ENCODE measurements at regions of chr20 and their contacts with region 1.

Region 1: DNA sequence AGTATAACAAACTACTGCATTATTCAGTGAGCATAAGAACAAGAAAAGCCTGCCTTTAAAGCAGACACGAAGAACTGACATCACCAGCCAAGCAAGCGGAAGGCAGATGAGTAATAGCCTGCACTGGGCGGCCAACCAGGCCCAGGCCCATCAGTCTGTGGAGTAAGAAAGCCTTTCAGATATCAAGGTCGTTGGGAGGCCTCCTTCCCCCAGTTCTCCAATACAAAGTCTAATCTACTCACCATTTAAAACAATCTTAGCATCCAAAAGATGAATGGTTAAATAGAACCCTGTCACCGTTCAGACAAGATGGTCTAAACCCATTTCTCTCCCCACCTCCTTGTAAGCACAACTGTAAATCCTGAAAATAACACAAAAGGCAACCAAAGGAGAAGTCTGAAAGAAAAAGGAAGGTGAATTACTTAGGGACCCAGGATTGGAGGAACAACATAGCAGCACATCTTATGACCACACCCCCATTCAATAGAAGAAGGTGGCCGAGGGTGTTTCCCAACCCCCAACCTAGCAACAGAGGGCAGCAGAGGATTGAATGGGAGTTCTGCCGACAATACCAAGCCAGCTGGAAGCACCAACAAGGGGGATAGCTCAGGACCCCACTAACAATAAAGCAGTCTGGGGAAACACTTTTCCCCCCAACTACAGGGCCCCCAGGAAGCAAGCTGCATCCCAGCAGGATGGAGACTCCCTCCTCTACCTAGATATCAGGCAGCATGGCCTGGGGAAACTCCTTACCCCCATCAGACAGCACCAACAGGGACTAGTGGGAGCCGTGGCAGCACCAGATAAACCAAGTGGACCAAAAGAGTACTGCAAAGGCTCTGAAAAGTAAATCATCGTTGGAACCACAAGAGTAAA is 67.9 kb downstream of the ZHX3 start:
- DNase-seq: peak; percentile 45 to 82 (median 71)
- ATAC-seq: peak; percentile 80 to 90 (median 84)
- H3K4me3 ChIP-seq: no peak overlapping the region
- H3K27ac ChIP-seq: peak overlapping the region; percentile 79 to 95 (median 89)
- H3K4me1 ChIP-seq: peaks cover 32 to 65% (median 60%) of the 10 kb centered on the region in 12 donors
- H3K27me3 ChIP-seq: no peaks in the 10 kb centered on the region
- CTCF ChIP-seq: peak in 11 of 12 donors; percentile 10 to 49 (median 37)
- POLR2A ChIP-seq: no peak

Region 2: DNA sequence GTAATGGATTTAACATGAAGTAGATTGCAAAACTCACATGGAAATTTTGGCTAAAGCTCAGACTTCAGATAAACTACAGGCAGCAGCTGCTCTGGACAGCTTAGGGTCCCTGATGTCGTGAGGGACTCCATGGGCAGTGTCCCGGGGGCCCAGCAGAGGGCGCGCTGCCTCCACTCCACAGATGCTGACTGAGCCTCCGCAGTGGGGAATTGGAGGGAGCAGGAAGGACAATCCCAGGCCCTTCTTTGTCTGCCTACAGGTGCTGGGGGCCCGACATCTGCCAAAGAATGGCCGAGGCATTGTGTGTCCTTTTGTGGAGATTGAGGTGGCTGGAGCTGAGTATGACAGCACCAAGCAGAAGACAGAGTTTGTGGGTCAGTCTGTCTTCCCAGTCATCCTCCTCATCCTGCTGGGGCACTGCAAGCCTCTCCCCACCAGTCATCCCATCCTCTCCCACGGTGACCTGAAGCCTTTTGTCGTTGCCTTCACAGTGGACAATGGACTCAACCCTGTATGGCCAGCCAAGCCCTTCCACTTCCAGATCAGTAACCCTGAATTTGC is 76.4 kb before region 1 on chr20:
- intact Hi-C with region 1: loop called in 2 of 10 experiments (anchors 5 kb)
- DNase-seq: peak; percentile 85 to 92 (median 87)
- ATAC-seq: peak; percentile 66 to 83 (median 80)
- H3K4me3 ChIP-seq: no peak overlapping the region
- H3K27ac ChIP-seq: peak overlapping the region; percentile 68 to 93 (median 84)
- H3K4me1 ChIP-seq: peaks cover 14 to 71% (median 54%) of the 10 kb centered on the region in 12 donors
- H3K27me3 ChIP-seq: no peaks in the 10 kb centered on the region
- CTCF ChIP-seq: peak; percentile 96 to 99 (median 98)
- POLR2A ChIP-seq: no peak

Region 3: GRCh38 chr20:41309817-41310216 is 60.2 kb after region 1 on chr20:
- intact Hi-C with region 1: loop called in 7 of 10 experiments (anchors 5 kb)
- DNase-seq: no peak
- ATAC-seq: peak in 1 of 4 donors; percentile 25
- H3K4me3 ChIP-seq: no peak overlapping the region
- H3K27ac ChIP-seq: peak overlapping the region in 4 of 12 donors; percentile 47 to 61 (median 48)
- H3K4me1 ChIP-seq: peaks cover 4 to 51% (median 33%) of the 10 kb centered on the region in 12 donors
- H3K27me3 ChIP-seq: no peaks in the 10 kb centered on the region
- CTCF ChIP-seq: no peak
- POLR2A ChIP-seq: no peak

Region 4: DNA sequence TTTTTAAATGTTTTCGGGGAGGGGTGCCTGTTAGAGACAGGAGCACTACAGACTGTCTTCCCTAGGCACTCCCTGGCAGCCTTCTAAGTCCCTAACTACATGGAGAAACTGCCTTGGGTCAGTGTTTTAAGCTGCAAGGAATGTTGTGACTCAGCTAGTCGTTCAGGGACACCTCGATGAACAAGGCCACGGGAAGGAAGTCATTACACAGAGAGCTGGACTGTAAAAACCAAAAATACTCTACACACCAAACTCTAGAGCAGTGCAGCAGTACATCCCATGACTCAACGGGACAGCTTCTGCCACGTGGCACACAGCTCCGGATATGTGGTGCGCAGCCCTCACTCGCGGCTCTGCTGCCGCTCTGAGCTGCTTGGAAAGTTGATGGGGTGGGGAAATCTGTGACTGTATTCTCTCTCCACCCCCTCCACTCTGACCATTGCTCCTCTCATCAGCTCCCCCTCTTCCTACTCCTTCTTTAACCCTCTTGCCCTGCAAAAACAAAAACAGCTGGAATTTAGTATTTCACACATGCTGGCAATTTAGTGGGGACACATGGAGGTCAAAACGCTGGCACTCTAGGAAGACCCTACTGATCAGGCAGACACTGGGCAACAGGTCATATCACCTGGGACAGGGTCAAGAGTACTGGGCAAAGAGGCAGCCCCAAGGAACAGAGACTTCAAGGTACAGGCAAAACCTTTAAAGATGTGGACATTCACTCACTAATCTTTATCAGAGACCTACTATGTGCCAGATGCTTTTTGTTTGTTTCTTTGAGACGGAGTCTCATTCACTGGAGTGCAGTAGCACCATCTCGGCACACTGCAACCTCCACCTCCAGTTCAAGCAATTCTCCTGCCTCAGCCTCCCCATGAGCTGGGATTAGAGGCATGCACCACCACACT is 80.0 kb after region 1 on chr20:
- intact Hi-C with region 1: loop called in 2 of 10 experiments (anchors 5 kb)
- DNase-seq: peak; percentile 75 to 89 (median 83)
- ATAC-seq: peak; percentile 95 to 99 (median 98)
- H3K4me3 ChIP-seq: peak overlapping the region in 2 of 12 donors; percentile 12 to 17
- H3K27ac ChIP-seq: peak overlapping the region; percentile 56 to 85 (median 78)
- H3K4me1 ChIP-seq: peaks cover 0 to 26% (median 14%) of the 10 kb centered on the region in 12 donors
- H3K27me3 ChIP-seq: no peaks in the 10 kb centered on the region
- CTCF ChIP-seq: no peak
- POLR2A ChIP-seq: peak in 1 of 2 donors; percentile 47

Region 5: DNA sequence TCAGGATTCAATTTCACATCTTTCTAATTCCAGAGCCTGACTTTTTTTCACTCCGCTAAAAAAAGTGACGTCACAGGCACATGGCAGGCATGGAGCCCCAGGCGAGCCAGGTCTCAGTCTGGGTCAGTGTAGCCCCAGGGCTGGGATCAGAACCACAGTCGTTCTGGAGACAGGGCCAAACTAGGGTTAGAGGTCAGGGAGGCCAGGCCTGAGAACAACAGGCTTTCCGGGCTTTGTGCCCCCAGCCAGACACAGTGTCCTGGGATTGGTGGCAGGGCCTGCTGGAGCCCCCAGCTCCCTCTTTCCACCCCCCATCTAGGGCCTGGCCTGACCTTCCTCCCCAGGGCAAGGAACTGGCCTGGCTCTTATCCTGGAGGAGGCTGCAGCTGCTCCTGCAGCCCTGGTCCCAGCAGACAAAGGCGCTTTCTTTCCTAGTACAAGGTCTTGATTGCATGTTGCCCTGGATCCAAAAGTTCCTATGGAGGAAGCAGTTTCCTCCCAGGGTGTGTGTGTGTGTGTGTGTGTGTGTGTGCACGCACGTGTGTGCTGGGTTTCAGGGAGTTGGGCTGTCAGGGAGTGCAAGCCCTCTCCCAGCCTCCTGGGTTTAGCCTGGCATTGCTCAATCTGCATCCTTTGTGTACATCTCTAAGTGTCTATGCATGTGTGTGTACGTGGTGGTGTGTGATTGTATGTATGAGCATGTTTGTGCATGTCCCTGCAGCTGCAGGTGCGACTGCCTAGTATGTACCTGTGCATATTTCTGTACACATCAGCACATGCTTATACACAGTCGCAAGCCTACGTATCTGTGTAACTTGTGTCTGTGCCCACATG is 143.4 kb after region 1 on chr20:
- intact Hi-C with region 1: loop called in 1 of 10 experiments (anchors 10 kb)
- DNase-seq: peak; percentile 67 to 92 (median 85)
- ATAC-seq: peak; percentile 77 to 90 (median 82)
- H3K4me3 ChIP-seq: no peak overlapping the region
- H3K27ac ChIP-seq: peak overlapping the region in 11 of 12 donors; percentile 14 to 85 (median 52)
- H3K4me1 ChIP-seq: peaks cover 0 to 59% (median 25%) of the 10 kb centered on the region in 12 donors
- H3K27me3 ChIP-seq: no peaks in the 10 kb centered on the region
- CTCF ChIP-seq: no peak
- POLR2A ChIP-seq: no peak

Region 6: DNA sequence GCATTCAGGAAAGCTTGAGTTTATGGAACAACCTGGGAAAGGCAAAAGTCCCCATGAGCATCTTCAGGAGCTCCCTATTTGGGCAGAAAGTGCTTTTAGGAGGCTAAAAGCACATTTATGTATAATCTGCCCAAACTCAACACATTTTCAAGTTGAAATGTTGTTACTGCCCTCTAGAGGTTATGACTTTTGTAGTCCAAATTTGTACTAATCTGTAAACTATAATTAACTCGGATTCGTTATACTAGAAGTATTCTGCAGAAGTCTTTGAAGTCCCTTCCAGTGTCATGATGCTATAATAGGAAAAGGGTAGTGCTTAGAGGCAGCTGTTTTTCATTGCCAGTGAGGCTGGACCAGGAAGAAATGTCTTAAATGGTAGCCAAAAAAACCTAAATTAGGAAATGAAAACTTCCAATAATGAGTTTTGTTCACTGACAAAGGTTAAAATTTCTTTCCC is 161.8 kb after region 1 on chr20:
- intact Hi-C with region 1: loop called in 3 of 10 experiments (anchors 5 to 10 kb)
- DNase-seq: no peak
- ATAC-seq: peak; percentile 69 to 87 (median 78)
- H3K4me3 ChIP-seq: no peak overlapping the region
- H3K27ac ChIP-seq: peak overlapping the region; percentile 67 to 89 (median 73)
- H3K4me1 ChIP-seq: peaks cover 3 to 55% (median 28%) of the 10 kb centered on the region in 12 donors
- H3K27me3 ChIP-seq: no peaks in the 10 kb centered on the region
- CTCF ChIP-seq: peak; percentile 30 to 68 (median 58)
- POLR2A ChIP-seq: no peak